Sigmoid colon (tissue), 7 donors: ENCODE measurements at regions of chr18 and their contacts with region 1.

Region 1: DNA sequence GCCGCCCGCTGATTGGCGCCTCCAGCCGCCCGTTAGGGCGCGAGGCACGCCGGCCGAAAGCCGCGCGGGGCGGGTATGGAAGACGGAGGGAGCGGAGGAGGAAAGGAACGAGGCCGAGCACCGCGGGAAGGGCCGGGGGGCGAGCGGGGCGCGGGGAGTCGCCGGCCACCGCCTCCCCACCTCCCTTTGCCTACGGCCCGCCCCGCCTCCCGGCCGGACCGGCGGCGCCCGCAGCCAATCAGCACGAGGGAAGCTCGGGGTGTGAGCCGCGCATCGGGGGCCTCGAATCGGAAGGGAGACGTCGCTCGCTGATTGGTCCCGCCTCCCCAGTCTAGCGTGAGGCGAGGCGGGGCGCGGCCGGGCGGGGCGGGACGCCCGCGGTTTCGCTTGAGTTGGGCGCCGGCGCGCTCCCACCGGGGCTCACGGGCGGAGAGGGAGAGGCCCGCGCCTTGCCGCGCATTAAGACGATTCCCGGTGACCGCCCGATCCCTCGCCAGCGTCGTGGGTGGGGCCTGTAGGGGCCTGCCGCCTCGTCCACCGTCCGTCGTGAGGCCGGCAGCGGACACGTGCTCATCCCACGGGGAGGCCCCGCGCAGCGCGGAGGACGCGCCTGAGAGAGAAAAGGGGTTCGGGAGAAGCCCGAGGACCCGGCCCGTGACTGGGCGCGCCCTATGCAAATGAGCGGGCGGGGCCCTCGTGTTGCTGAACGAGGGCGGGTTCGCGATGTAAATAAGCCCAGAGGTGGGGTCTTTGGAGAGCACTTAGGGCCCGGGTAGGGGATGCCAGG is 665 bp upstream of the SMAD2 start:
- DNase-seq: peak; percentile 99
- H3K4me3 ChIP-seq: peak overlapping the region; percentile 44 to 89 (median 70)
- H3K27ac ChIP-seq: peak overlapping the region; percentile 87 to 96 (median 95)
- H3K4me1 ChIP-seq: peaks cover 0 to 40% (median 33%) of the 10 kb centered on the region in 4 donors
- H3K27me3 ChIP-seq: no peaks in the 10 kb centered on the region
- CTCF ChIP-seq: no peak
- EP300 ChIP-seq: no peak
- POLR2A ChIP-seq: peak; percentile 22 to 32

Region 2: DNA sequence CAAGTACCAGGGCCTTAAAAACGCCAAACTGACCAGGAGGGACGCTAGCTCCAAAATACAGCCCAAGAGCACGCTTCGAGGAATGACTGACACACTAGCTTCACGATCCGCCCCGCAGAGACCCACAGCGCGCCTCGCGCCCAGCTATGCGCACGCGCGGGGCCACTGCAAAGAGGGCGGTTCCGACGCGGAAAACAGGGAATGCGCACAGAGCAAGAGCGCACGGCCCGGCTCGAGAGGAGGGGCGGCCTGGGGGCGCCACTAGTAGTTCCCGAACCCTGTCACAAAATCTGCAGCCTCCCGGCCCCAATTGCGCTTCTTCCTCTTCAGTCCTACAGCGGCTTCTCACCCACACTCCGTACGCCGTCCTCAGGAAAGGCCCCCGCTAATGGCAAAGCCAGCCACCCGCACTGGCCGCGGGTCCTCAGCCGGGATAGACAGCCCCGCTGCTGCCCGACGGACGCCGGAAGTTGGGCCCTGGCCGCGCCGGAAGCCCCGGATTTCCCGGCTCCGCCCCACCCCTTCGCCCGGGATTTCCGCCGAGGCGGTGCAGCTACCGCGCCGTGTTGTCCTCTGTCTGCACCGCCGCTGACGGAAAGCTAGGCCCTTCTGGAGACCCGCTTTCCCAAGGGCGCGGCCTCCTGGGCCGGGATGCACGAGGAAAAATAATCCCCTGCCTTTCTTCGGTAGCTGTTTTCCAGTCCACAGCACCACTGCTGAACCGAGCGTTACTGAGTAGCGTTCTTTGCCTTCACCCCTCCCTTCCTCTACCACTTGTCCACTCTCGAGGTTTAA is 780.9 kb before region 1 on chr18 and contains the start of gene HDHD2:
- intact Hi-C with region 1: loop called (anchors 10 kb)
- DNase-seq: peak; percentile 90
- H3K4me3 ChIP-seq: peak within 1 kb of the TSS; percentile 66 to 73 (median 66)
- H3K27ac ChIP-seq: peak within 1 kb of the TSS; percentile 88 to 94 (median 90)
- H3K4me1 ChIP-seq: peaks cover 0 to 23% (median 18%) of the 10 kb centered on the region in 4 donors
- H3K27me3 ChIP-seq: no peaks in the 10 kb centered on the region
- CTCF ChIP-seq: no peak
- EP300 ChIP-seq: peak in 1 of 4 donors; percentile 32
- POLR2A ChIP-seq: peak; percentile 85 to 93
- total RNA-seq, gene HDHD2: 21.0 to 30.3 (median 25.6) TPM

Region 3: GRCh38 chr18:47748847-47749599 is 182.1 kb before region 1 on chr18:
- intact Hi-C with region 1: loop called (anchors 5 kb)
- DNase-seq: peak; percentile 77
- H3K4me3 ChIP-seq: peak overlapping the region; percentile 14 to 43 (median 32)
- H3K27ac ChIP-seq: no peak overlapping the region
- H3K4me1 ChIP-seq: peaks cover 0 to 7% (median 4%) of the 10 kb centered on the region in 4 donors
- H3K27me3 ChIP-seq: peaks cover 0 to under 1% (median 0%) of the 10 kb centered on the region in 3 donors
- CTCF ChIP-seq: peak; percentile 63 to 100 (median 84)
- EP300 ChIP-seq: no peak
- POLR2A ChIP-seq: no peak

Region 4: GRCh38 chr18:47870605-47871004 is 60.5 kb before region 1 on chr18:
- intact Hi-C with region 1: loop called (anchors 5 kb)
- DNase-seq: no peak
- H3K4me3 ChIP-seq: no peak overlapping the region
- H3K27ac ChIP-seq: no peak overlapping the region
- H3K4me1 ChIP-seq: peaks cover 0 to 24% (median 14%) of the 10 kb centered on the region in 4 donors
- H3K27me3 ChIP-seq: no peaks in the 10 kb centered on the region
- CTCF ChIP-seq: no peak
- EP300 ChIP-seq: no peak
- POLR2A ChIP-seq: no peak

Region 5: DNA sequence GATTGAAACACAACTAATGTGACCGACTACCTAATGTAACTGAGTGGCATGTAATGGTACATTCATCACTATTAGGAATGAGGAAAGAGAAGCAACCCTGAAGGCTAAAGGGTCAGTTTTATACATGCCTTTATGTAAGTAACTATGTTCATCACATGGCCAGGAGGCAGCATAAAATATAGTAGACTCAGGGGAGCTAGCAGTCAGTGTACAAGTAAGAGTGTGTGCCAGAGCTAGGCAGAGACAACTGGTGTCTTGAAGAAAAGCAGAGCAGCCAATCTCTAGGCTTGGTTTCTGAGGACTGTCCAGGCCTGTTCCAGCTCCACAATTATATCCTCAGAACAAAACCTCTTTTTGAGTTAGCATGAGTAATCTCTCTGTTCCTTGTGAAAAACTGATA is 18.8 kb before region 1 on chr18:
- intact Hi-C with region 1: loop called (anchors 1 kb)
- DNase-seq: peak; percentile 72
- H3K4me3 ChIP-seq: no peak overlapping the region
- H3K27ac ChIP-seq: peak overlapping the region in 3 of 4 donors; percentile 68 to 84 (median 79)
- H3K4me1 ChIP-seq: peaks cover 0 to 86% (median 54%) of the 10 kb centered on the region in 4 donors
- H3K27me3 ChIP-seq: no peaks in the 10 kb centered on the region
- CTCF ChIP-seq: no peak
- EP300 ChIP-seq: peak in 1 of 4 donors; percentile 22
- POLR2A ChIP-seq: no peak

Region 6: GRCh38 chr18:48161191-48161910 is 230.2 kb after region 1 on chr18:
- intact Hi-C with region 1: loop called (anchors 5 kb)
- DNase-seq: peak; percentile 91
- H3K4me3 ChIP-seq: peak overlapping the region; percentile 36 to 87 (median 70)
- H3K27ac ChIP-seq: peak overlapping the region; percentile 77 to 89 (median 84)
- H3K4me1 ChIP-seq: peaks cover 0 to 19% (median 9%) of the 10 kb centered on the region in 4 donors
- H3K27me3 ChIP-seq: no peaks in the 10 kb centered on the region
- CTCF ChIP-seq: no peak
- EP300 ChIP-seq: no peak
- POLR2A ChIP-seq: peak in 1 of 2 donors; percentile 13

Region 7: DNA sequence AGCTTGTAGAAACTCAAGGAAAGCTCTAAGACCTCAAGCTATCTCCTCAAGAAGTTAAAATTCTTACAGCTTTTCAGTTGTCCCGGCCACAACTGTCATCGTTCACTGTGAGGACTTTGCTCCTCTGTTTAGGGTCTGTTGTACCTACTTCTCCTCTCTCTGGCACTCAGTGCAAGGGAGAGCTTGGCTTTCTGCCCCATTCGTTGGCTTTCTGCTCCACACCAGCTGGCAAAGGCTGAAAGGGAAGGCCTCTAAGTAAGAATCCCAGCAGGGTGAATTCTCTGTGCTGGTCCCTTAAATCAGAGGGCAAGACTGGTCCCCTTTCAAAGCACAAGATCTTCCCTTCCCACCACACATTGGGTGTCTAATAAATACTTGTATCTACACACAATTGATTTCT is 460.7 kb after region 1 on chr18:
- intact Hi-C with region 1: no loop called
- DNase-seq: no peak
- H3K4me3 ChIP-seq: no peak overlapping the region
- H3K27ac ChIP-seq: no peak overlapping the region
- H3K4me1 ChIP-seq: peaks cover 0 to 6% (median 0%) of the 10 kb centered on the region in 4 donors
- H3K27me3 ChIP-seq: peaks cover 0 to 18% (median 11%) of the 10 kb centered on the region in 3 donors
- CTCF ChIP-seq: no peak
- EP300 ChIP-seq: no peak
- POLR2A ChIP-seq: no peak

Region 8: DNA sequence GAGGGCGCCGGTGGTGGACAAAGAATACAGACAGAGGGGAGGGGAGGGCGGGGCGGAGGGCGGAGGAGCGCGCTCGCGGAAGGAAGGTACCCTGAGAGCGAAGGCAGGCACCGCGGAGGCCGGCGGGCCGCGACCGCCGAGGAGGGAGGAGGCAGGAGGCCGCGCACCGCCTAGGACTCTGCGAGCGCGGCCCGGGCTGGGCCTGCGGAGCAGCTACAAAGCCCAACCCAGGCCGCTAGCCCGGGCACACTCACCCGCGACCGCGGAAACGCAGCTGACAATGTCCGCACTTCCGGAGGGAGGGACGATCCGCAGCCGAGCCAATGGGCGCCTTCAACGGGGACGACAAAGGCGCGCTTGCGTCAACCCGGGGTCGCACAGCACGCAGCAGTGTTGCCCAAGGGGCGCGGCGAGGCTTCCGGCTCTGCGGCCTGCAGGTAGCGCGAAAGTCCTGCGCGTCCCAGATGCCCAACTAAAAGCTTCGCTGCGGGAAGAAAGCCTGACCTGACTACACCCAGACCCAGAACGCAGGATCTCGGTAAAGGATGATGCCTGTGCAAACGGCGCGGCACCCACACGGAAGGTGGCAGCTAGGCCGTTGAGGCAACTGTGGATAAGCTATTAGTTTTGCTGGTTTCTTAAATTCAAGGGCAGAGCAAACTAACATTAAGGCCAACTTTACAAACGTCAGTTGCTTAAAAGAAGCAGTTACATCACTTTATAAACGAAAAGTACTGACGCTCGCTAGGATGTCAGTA is 1556.0 kb after region 1 on chr18 and contains the start of gene C18orf32:
- intact Hi-C with region 1: loop called (anchors 5 kb)
- DNase-seq: peak; percentile 98
- H3K4me3 ChIP-seq: peak within 1 kb of the TSS; percentile 67 to 92 (median 86)
- H3K27ac ChIP-seq: peak within 1 kb of the TSS; percentile 93 to 98 (median 96)
- H3K4me1 ChIP-seq: peaks cover 0 to 46% (median 37%) of the 10 kb centered on the region in 4 donors
- H3K27me3 ChIP-seq: no peaks in the 10 kb centered on the region
- CTCF ChIP-seq: no peak
- EP300 ChIP-seq: no peak
- POLR2A ChIP-seq: peak; percentile 92 to 94
- total RNA-seq, gene C18orf32: 29.1 to 57.8 (median 45.8) TPM